Dendritic cell treated with granulocyte-macrophage colony-stimulating factor and Interleukin-4, amounts not matched to agents 40 ng/mL and 50 ng/mL, for 4 days (primary cell): ENCODE measurements at regions of chr16 and their contacts with region 1.

Region 1: DNA sequence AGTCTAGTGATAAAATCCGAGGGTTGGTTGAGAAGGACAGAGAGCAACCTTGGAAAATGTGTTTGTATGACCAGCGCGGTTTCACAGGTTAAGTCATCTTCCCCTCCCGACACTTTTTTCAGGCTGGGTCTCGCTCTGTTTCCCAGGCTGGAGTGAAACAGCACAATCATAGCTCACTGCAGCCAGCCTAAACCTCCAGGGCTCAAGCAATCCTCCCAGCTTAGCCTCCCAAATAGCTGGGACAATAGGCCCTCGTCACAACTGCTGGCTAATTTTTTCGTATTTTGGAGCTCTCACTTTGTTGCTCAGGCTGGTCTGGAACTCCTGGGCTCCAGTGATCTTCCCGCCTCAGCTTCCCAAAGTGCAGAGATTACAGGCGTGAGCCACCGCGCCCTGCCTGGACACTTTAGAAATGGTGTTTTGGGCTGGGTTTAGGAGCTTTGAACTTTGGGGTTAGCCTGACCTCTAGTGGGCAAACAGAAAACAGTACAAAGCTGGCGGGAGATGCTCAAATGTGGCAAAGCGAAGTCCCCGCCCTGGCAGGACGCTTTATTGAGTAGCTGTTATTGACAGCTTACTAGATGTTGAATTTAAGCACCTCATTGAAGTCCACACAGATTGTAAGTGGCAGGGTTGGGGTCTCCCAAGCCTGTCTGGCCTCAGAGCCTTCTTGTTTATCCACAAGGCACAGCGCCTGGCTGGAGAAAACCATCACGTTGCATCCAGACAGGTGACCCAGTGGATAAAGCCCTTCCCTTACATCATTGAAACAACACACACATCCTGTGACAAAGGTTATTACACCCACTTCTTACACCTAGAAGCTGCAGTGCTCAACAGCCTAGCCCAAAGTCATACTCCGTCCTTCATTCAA is 34.7 kb upstream of the RBBP6 start:
- H3K4me3 Mint-ChIP-seq: no peak overlapping the region
- H3K27ac Mint-ChIP-seq: no peak overlapping the region
- H3K4me1 Mint-ChIP-seq: peaks cover 8% of the 10 kb centered on the region
- H3K27me3 Mint-ChIP-seq: peaks cover 14% of the 10 kb centered on the region

Region 2: DNA sequence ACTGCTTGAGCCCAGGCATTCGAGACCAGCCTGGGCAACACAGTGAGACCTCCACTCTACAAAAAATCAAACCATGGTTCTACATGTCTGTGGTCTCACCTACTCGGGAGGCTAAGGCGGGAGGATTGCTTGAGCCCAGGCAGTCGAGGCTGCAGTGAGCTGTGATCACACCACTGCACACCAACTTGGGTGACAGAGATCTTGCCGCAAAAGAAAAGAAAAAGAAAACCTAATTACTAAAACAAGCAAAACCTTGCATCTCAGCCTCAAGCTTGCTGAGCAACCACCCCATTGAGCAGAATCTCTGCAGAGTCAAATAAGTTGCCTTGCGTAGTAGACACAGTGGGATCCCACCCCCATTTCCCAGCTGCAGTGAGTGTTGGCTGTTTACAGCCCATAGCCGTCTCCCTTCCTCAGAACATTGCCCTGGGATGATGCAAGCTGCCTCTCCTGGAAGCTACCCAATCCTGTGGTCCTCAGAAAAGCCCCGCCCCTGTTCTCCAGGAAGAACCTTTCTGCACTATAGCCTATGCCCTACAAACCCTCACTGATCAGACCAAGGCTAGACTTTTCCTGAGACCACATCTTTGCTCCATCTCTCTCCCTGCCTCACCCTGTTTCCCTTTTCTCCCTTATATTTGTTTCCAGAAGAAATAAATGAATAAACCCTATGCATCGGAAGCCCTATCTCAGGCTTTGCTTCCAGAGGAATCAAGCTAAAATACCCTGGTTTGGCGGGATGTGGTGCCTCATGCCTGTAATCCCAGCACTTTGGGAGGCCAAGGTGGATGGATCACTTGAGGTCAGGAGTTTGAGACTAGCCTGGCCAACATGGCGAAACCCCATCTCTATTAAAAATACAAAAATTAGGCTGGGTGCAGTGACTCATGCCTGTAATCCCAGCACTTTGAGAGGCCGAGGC is 774.9 kb before region 1 on chr16:
- intact Hi-C with region 1: loop called (anchors 10 kb)
- H3K4me3 Mint-ChIP-seq: no peak overlapping the region
- H3K27ac Mint-ChIP-seq: no peak overlapping the region
- H3K4me1 Mint-ChIP-seq: peaks cover 11% of the 10 kb centered on the region
- H3K27me3 Mint-ChIP-seq: peaks cover 5% of the 10 kb centered on the region

Region 3: DNA sequence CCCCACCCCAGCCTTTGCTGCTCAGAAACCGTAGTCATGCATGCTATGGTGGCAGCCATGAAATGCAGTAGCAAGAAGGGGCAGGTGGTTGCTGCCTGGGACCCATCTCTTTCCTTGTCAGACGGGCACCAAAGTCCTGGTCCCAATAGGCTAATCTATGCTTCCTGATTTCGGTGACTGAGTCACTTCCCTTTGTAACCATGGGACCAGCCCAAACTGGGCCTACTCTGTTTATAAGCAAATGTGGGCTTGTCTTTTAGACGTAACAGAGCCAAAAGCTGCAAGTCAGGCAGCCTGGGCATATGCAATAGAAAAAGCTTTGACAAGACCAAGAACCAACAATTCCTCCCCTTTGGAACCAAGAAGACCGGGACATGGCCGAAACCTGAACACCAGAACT is 64.4 kb before region 1 on chr16:
- intact Hi-C with region 1: no loop called
- H3K4me3 Mint-ChIP-seq: no peak overlapping the region
- H3K27ac Mint-ChIP-seq: no peak overlapping the region
- H3K4me1 Mint-ChIP-seq: no peaks in the 10 kb centered on the region
- H3K27me3 Mint-ChIP-seq: peaks cover 3% of the 10 kb centered on the region